ENCODE measurements at regions of chr14 and their contacts with region 1.

Region 1: DNA sequence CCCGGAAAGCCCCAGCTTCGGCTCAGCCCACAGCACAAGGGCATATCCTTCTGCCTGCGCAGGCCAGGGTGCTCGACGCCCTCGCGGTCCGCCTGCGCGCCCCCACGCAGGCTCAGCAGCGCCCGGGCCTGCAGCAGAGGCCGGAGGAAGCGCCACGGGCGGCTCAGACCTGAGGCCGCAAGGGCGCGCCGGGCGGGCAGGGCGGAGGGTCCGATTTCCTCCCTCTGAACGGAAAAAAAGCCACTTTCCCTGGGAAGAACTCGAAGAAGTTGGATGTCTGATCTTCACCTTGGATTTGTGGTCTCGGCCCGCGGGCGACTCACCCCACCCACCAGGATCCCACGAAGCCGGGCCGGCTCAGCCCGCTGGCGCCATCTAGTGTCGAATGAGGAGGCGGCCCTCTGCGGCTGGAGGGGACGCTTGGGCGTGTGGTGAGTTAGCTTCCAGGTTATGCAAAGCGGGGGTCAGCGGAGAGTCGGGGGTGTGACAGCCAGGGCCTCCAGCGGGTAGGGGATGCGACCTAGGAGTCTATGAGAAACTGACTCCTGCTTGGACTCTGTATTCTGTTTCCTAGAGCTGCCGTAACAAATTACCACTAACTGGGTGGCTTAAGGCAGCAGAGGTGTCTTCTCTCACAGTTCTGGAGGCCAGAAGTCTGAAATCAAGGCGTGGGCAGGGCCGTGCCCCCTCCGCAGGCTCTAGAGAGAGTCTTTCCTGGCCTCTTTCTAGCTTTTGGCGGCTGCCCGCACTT is 40.0 kb upstream of the SRSF5 start:
- DNase-seq: peak; percentile 93
- ATAC-seq: peak; percentile 99

Region 2: GRCh38 chr14:69584389-69584788 is 142.5 kb before region 1 on chr14:
- intact Hi-C with region 1: loop called (anchors 2 kb)
- DNase-seq: no peak
- ATAC-seq: no peak

Region 3: DNA sequence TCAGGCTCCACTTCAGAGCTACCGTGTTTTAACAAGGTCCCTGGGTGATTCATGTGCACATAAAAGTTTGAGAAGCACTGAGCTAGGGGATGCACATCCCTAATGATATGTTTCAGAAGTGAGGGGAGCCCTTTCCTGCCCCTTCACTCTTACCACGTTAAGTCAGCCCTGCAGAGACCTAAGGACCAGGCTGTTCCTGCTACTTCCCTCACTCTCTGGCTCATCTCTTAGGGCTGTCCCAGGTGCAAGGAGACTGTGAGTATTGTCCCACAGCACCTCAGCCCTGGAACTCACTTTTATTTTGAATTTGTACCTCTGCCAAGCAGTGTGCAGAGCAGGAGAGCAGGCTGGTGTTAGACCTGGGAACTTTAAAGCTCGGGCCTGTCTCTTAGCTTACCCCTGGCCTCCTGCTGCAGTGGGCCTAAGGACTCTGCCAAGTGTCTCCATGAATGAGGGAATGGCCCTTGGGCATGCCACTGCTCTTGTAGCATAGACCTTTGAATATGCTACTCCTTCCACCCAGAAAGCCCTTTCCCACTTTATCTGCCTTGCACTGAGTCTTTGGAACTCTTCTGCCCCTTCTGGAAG is 126.5 kb before region 1 on chr14:
- intact Hi-C with region 1: loop called (anchors 5 kb)
- DNase-seq: no peak
- ATAC-seq: no peak

Region 4: DNA sequence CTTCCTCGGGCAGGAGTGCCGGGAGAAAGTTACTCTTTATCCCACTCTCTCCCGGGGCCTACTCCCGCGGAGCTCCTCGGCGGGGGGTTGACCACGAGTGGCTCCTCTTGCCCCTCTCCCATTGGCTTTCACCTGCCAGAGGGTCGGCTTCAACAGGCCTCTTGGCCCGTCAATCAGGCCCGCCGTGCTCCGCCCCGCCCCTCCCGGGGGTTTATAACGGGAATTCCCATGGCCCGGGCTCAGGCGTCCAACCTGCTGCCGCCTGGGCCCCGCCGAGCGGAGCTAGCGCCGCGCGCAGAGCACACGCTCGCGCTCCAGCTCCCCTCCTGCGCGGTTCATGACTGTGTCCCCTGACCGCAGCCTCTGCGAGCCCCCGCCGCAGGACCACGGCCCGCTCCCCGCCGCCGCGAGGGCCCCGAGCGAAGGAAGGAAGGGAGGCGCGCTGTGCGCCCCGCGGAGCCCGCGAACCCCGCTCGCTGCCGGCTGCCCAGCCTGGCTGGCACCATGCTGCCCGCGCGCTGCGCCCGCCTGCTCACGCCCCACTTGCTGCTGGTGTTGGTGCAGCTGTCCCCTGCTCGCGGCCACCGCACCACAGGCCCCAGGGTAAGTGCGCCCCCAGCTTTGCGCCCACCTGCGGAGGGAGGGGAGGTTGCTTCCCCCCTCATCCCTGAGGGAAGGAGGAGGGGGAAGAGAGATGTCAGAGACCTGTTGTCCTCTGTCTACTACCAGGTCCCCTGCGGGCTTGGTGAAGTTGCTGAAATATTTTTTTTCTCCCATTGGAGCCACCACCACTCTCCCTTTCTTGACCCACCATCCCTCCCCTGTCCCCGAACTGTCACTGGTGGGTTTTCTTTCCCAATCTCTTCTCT is 152.5 kb after region 1 on chr14 and contains the start of gene SMOC1:
- intact Hi-C with region 1: no loop called
- DNase-seq: peak; percentile 60
- ATAC-seq: peak; percentile 61
- total RNA-seq, gene SMOC1: 1.8 TPM

Measured in Right ventricle myocardium superior (tissue), 1 donor.